ENCODE measurements at regions of chr13 and their contacts with region 1.

Region 1: DNA sequence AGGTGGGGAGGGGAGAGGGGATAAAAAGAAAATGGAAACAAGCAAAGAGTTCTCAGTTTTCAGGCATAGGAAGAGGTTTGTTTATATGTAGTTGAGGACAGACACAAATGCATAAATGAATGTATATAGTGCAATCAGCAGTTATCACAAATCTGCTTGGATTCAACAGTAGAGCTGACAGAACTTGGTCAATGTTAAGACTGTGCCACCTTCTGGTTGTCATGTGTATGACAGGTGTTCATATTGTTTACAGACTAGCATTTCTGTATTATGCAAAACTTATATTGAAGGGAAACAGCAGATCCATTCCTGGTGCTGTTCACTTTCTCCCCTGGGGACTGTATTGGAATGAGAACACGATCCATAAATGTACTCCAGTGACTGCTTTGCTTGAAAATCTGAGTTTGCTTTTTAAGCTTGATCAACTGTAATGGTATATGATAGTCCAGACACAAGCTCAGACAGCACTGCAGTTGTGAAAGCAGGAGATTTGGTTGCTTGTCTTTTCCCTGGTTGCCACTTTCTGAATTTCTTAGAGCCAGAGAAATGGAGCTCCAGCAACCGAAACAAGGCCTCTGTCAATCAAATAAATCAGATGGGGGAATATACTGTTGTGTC is 319.5 kb upstream of the OBI1 start:
- DNase-seq: peak; percentile 66
- H3K4me3 ChIP-seq: no peak overlapping the region
- H3K27ac ChIP-seq: no peak overlapping the region
- H3K4me1 ChIP-seq: no peaks in the 10 kb centered on the region
- CTCF ChIP-seq: peak; percentile 88

Region 2: GRCh38 chr13:78137404-78138142 is 840.9 kb before region 1 on chr13:
- CTCF ChIA-PET with region 1: no interaction called
- POLR2A ChIA-PET with region 1: no interaction called
- intact Hi-C with region 1: loop called (anchors 2 kb)
- DNase-seq: peak; percentile 51
- H3K4me3 ChIP-seq: no peak overlapping the region
- H3K27ac ChIP-seq: no peak overlapping the region
- H3K4me1 ChIP-seq: no peaks in the 10 kb centered on the region
- CTCF ChIP-seq: peak; percentile 86

Region 3: DNA sequence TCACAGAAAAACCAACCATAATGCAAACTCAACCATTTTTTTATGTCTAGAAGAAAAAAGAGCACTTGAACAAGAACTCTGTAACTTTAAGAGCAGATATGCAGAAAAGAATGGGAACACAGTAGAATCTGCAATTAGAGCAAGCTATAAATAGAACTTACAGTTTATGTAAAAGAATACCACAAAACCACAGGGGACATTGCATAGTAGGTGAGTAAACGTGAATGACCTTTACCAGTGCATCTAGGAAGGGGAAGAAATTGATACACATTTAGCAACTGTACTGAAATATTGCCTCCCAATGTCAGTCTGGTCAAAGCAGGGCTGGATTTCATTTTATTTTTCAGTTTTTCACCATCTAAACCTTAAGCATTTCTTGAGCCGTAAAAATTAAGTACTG is 817.7 kb before region 1 on chr13:
- CTCF ChIA-PET with region 1: no interaction called
- POLR2A ChIA-PET with region 1: no interaction called
- intact Hi-C with region 1: no loop called
- DNase-seq: no peak
- H3K4me3 ChIP-seq: no peak overlapping the region
- H3K27ac ChIP-seq: no peak overlapping the region
- H3K4me1 ChIP-seq: no peaks in the 10 kb centered on the region
- CTCF ChIP-seq: no peak

Region 4: GRCh38 chr13:78241278-78241919 is 737.1 kb before region 1 on chr13:
- CTCF ChIA-PET with region 1: no interaction called
- POLR2A ChIA-PET with region 1: no interaction called
- intact Hi-C with region 1: loop called (anchors 1 kb)
- DNase-seq: peak; percentile 41
- H3K4me3 ChIP-seq: no peak overlapping the region
- H3K27ac ChIP-seq: no peak overlapping the region
- H3K4me1 ChIP-seq: no peaks in the 10 kb centered on the region
- CTCF ChIP-seq: peak; percentile 87

Region 5: GRCh38 chr13:78960881-78961280 is 17.6 kb before region 1 on chr13:
- CTCF ChIA-PET with region 1: no interaction called
- POLR2A ChIA-PET with region 1: no interaction called
- intact Hi-C with region 1: no loop called
- DNase-seq: no peak
- H3K4me3 ChIP-seq: no peak overlapping the region
- H3K27ac ChIP-seq: no peak overlapping the region
- H3K4me1 ChIP-seq: no peaks in the 10 kb centered on the region
- CTCF ChIP-seq: no peak

Measured in OCI-LY7 (cell line).